PC-9 (cell line): ENCODE measurements at regions of chr2 and their contacts with region 1.

Region 1: DNA sequence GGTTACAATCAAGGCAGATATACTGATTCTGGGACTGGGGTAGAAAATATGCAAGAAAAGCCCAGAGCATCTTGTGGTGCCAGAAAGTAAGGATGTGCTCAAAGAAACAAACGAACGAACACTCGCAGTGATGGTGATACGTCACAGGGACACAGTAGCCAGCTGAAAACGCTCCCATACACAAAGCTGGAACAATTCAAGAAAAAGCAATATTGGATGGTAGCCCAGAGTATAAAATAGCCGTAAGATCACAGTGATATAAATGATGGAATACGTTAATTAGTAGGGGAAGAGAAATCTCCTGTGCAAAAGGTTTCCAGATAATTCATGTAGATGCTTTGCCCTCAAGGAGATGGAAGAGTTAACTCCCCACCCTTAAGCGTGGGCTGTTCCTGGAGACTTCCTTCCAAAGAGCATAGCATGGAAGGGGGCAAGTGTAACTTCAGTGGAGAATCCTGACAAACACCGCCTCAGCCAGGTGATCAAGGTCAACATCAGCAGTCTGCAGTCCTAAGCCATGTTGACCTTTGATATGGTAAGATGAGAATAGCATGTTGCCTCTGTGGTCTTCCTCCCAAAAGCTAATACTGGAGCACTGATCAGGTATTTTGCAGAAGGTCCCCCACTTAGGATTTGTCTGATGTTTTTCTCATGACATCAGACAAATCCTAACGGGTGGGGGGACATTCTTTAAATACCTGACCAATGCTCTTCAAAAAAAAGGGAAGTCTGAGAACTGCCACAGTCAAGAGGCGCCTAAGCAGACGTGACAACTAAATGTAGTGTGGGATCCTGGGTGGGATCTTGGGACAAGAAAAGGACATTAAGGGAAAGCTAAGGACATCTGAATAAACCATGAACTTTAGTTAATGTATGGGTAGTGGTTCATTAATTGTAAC is 99.0 kb downstream of the NCK2 start:
- DNase-seq: no peak
- H3K4me3 ChIP-seq: no peak overlapping the region
- H3K27ac ChIP-seq: no peak overlapping the region
- H3K4me1 ChIP-seq: no peaks in the 10 kb centered on the region
- H3K27me3 ChIP-seq: no peaks in the 10 kb centered on the region
- CTCF ChIP-seq: no peak

Region 2: DNA sequence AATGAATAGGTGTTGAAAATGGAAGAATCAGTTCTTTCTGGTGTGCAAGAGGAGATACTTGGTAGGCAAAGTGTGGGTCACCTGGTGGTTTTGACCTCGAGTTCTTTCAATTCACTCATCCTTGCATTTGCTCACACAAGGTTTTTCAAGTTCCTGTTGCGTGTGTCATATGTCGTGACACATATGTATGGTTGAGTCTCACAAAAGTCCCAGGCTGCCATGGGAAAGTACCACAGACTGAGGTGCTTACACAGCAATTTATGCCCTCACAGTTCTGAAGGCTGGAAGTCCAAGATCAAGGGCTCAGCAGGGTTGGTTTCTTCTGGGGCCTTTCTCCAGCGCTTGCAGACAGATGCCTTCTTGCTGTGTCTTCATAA is 34.6 kb before region 1 on chr2:
- CTCF ChIA-PET with region 1: interaction called, 12 read pairs
- POLR2A ChIA-PET with region 1: no interaction called
- intact Hi-C with region 1: no loop called
- DNase-seq: no peak
- H3K4me3 ChIP-seq: no peak overlapping the region
- H3K27ac ChIP-seq: no peak overlapping the region
- H3K4me1 ChIP-seq: no peaks in the 10 kb centered on the region
- H3K27me3 ChIP-seq: no peaks in the 10 kb centered on the region
- CTCF ChIP-seq: no peak